ENCODE measurements at regions of chr1 and their contacts with region 1.

Region 1: DNA sequence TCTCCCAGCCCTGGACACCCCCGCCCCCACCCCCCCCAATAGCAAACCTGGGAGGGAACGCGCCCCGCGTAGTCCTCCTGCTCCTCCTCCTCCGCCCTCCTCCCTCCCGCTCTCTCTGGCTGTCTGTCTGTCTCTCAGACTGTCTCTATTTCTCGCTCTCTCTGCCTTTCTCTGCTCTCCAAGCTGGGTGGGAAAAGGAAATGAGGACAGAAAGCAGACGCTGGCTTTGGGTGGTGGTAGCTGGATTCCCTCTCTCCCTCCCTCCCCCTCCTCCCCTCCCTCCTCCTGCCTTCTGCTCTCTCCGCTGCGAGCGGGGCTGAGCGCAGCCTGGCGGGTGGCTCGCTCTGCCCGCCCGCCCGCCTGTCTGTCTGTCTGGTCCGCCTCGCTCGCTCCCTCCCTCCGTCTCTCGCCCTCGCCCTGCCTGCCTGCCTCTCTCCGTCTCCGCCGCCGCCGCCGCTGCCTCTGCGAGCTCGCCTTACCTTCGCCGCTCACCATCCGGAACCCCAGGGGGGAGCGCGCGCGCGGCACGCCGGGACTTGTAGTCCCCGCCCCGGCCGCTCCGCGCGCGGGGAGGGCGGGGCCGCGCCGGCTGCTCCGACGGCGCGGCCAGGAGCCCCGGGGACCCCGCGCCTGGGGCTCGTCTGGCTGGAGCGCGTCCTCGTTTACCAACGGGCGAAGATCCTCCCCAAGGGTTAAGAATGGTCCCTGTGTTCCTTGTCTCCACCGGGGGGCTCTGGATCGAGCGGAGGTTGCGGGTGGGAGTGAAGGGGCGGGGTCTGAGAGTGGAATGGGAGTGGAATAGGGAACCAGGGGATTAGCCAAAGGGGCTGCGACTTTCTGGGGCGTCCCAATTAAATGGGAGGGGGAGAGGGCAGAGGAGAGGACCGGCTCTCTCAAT is at the start of gene AHDC1:
- DNase-seq: peak; percentile 33
- H3K4me3 ChIP-seq: peak within 1 kb of the TSS; percentile 87
- CTCF ChIP-seq: no peak

Region 2: DNA sequence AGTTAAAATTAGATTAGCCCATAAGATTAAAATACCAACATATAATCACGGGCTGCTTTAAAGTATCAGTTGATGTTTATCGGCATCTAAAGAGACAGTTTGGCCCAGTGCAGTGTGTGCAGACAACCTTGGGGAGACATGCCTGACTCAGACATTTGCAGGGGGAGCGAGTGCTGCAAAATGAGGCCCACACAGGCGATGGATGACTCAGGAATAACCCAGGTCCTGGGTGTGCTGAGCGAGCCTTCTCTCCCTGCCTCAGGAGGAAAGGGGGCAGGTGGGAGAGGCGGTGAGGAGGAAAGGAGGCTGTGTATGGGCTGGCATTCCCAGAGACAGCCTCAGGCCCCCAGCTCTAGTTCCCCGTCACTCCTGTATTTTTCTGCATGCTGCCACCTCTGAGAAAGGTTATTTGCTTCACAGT is 458.0 kb before region 1 on chr1:
- CTCF ChIA-PET with region 1: no interaction called
- POLR2A ChIA-PET with region 1: no interaction called
- DNase-seq: peak; percentile 61
- H3K4me3 ChIP-seq: no peak overlapping the region
- CTCF ChIP-seq: no peak

Region 3: DNA sequence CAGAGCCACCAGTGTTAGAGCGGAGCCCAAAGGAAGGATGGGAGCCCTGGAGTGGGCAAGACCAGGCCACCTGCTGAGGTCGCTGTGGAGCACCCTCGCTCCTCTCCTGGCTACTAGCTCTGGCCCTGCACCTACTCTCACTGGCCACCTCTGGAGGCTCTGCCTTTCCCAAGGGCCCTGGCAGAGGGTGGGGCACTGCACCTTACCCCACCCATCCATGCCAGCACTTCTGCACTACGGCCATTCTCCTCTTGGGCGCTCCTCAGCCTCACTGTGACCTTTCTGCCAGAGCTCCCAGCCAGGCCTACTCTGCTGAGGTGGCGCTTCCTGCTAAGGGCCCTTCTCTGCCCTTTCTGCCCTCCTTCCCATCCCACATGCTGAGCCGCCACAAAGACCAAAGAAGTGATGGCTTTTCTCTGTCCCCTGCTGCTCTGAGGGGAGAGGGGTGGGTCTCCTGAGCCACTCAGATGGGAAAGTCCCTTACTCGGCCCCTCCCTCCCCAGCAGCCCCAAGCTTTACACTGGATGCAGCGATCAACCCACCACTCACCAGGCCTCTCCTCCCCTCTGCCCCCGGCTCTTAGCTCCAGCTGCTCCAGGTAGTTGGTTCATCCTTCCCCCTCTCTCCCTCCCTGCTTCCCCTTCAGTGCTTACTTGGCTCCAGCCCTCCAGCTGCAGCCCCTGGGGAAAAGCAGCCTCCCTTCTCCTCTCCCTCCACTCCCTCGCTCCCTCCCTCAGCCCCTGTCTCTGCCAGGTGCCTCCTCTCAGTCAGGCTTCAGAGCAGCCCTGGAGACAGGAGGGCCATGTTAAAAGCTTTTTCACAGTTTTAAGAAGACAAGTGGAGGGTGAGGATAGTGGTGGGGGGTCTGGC is 296.8 kb before region 1 on chr1:
- CTCF ChIA-PET with region 1: interaction called, 246 read pairs
- POLR2A ChIA-PET with region 1: no interaction called
- DNase-seq: no peak
- H3K4me3 ChIP-seq: no peak overlapping the region
- CTCF ChIP-seq: peak; percentile 19

Region 4: GRCh38 chr1:27365372-27366112 is 238.4 kb before region 1 on chr1:
- CTCF ChIA-PET with region 1: interaction called, 53 read pairs
- POLR2A ChIA-PET with region 1: no interaction called
- DNase-seq: peak; percentile 42
- H3K4me3 ChIP-seq: peak overlapping the region; percentile 63
- CTCF ChIP-seq: no peak

Region 5: DNA sequence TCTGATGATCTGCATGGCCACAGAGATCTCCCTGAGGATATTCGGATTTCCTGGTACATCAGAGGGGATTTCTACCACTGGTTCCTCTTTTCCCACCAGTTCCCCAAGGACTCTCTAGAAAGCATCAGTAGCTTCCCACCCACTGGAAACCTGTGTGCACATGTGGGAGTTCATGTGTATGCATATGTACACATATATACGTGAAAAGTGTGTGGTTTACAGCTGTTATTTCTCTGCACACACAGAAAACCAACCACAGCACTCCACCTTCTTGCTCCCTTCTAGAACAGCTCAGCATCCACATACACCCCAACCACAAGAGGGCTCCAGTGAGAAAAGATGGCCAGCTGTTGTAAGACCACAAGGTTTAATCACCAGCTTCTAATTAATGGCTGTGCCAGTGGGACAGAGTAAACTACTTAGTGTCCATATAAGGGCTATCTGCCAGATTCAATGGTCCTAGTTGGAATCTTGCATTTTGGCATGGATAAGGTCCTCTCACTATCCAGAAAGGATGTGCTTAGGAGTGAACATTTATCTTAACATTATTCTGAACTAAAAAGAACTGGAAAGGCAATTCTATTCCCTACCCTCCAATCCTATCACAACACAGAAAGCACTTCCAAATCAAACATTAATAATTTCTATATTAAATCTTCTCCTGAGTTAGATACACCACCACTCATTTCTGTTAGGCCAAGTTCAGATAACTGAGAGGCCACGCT is 187.4 kb before region 1 on chr1:
- CTCF ChIA-PET with region 1: interaction called, 143 read pairs
- POLR2A ChIA-PET with region 1: interaction called, 3 read pairs
- DNase-seq: no peak
- H3K4me3 ChIP-seq: no peak overlapping the region
- CTCF ChIP-seq: peak; percentile 61

Region 6: DNA sequence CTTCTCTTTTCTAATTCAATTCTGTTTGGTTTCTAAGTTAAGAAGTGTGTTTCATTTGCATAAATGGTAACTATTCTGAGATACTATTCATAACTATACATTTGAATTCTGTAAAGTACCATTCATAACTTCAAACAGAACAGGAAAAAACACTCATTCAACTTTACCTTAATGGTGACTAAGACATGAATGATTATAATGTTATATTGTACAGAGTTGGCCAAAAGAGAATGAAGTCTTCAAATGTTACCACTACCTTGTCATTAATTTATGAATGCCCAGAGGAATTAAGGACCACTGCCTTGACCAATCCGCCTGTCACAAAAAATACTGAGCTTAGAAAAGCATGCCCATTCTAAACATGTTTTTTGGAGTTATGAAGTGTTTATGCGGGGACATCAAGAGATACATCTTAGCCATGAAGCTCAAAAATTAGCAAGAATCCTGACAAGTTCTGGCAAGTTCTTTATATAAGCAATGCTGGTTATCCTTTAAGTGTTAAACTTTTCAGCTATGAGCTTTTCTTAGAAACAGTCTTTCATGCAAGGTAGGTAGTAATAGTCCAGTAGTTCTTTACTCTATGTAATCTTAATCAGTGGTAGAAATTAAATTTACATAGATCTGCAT is 121.8 kb before region 1 on chr1:
- CTCF ChIA-PET with region 1: no interaction called
- POLR2A ChIA-PET with region 1: no interaction called
- DNase-seq: no peak
- H3K4me3 ChIP-seq: no peak overlapping the region
- CTCF ChIP-seq: no peak

Region 7: GRCh38 chr1:27556781-27557595 is 46.9 kb before region 1 on chr1:
- CTCF ChIA-PET with region 1: interaction called, 689 read pairs
- POLR2A ChIA-PET with region 1: interaction called, 14 read pairs
- DNase-seq: peak; percentile 76
- H3K4me3 ChIP-seq: peak overlapping the region; percentile 29; the same call in 1 of the 2 replicates
- CTCF ChIP-seq: peak; percentile 88

Region 8: DNA sequence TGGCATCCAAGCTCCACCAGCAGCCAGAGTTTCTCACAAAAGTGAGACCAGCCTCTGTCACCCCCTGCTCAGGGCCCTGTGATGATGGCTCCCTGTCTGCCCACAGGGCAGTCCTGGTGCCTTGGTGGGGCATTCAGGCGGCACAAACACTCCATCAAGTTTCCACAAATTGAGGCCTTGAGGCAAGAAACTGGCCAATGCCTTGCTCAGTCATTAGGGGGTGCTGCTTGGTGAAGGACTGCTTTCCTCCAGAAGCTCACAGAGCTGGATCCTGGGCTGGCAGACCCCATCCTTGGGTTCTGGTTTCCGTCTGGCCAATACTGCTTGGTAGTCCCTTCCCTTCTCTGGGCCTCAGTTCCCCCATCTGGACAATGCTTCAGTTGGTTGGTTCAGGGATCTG is 12.5 kb after region 1 on chr1:
- CTCF ChIA-PET with region 1: interaction called, 135 read pairs
- POLR2A ChIA-PET with region 1: no interaction called
- DNase-seq: no peak
- H3K4me3 ChIP-seq: no peak overlapping the region
- CTCF ChIP-seq: no peak

Measured in AG04449 (cell line).